H1 (cell line): ENCODE measurements at regions of chr16 and their contacts with region 1.

Region 1: DNA sequence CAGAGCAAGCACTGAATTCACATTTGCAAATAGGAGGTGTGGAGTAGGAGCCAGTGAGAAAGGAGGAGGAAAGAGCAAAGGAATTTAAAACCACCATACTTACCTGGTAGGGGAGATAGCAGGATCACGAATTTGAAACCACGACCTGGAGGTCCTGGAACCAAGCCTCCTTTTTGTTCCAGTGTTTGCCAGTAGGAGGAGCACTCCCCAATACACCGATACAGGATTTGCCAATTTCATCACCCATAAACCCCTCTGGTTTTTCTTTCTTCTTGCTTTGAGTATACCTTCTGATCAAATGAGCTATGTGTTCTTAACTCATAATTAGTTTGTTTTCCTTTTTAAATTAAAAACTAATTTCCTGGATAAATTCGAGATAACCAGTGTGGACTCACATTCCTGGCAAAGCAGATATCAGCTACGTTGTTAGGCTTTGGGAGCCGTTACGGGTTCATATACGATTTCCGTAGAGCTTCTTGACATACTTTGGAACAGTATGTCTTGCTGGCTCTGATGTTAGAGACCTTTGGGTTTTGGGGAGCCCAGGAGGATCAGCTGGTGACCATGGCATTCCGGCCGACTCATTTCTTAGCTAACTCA is 22.7 kb downstream of the BCO1 start:
- DNase-seq: peak in 1 of 2 experiments; percentile 60
- H3K4me3 ChIP-seq: no peak overlapping the region
- H3K27ac ChIP-seq: no peak overlapping the region
- H3K4me1 ChIP-seq: no peaks in the 10 kb centered on the region
- H3K27me3 ChIP-seq: no peaks in the 10 kb centered on the region
- CTCF ChIP-seq: peak; percentile 23 to 78 (median 46)
- EP300 ChIP-seq: no peak
- POLR2A ChIP-seq: no peak
- RAD21 ChIP-seq: peak; percentile 33 to 54

Region 2: GRCh38 chr16:81237282-81237681 is 23.9 kb before region 1 on chr16:
- CTCF ChIA-PET with region 1: interaction called, 13 read pairs
- POLR2A ChIA-PET with region 1: no interaction called
- DNase-seq: no peak
- H3K4me3 ChIP-seq: no peak overlapping the region
- H3K27ac ChIP-seq: no peak overlapping the region
- H3K4me1 ChIP-seq: peaks cover 0 to 13% (median 5%) of the 10 kb centered on the region in 4 experiments; a peak in 6 of 7 replicates
- H3K27me3 ChIP-seq: no peaks in the 10 kb centered on the region
- CTCF ChIP-seq: no peak
- EP300 ChIP-seq: no peak
- POLR2A ChIP-seq: no peak
- RAD21 ChIP-seq: no peak

Region 3: DNA sequence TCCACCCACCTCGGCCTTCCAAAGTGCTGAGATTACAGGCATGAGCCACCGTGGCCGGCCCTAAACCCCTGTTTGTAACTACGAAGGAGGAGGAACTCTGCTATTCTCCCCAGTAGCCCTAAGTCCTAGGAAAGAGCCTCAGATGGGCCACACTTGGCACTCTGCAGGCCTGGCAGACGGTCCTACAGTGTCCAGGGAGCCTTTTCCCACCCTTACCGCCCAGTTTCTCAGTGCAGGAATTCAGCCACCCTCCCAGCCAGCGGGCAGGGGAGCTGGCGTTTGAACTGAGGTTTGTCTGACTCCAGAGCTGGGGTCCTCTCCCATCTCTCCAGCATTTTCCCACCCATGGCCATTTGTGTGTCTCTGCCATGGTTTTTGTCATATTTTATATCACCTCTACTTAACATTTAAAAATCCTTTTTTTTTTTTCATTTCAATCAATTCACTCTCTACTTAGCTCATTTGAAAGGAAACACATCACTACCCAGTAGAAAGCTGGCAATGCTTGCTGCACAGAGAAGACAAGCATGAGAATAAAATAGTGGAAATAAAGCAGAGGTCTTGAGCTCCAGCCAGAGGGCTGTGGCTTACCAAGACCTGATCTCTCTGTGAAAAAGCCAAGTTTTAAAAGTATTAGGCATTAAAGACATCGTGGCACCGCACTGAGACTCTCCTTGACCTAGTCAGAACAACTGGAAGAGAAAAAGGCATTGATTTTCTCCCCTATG is 12.2 kb after region 1 on chr16:
- CTCF ChIA-PET with region 1: interaction called, 17 read pairs
- POLR2A ChIA-PET with region 1: no interaction called
- DNase-seq: no peak
- H3K4me3 ChIP-seq: no peak overlapping the region
- H3K27ac ChIP-seq: no peak overlapping the region
- H3K4me1 ChIP-seq: peaks cover 0 to 3% (median 0%) of the 10 kb centered on the region in 4 experiments; a peak in 1 of 7 replicates
- H3K27me3 ChIP-seq: no peaks in the 10 kb centered on the region
- CTCF ChIP-seq: no peak
- EP300 ChIP-seq: no peak
- POLR2A ChIP-seq: no peak
- RAD21 ChIP-seq: no peak